ENCODE measurements at regions of chr2 and their contacts with region 1.

Region 1: GRCh38 chr2:175251425-175252041 is 70.0 kb upstream of the ATP5MC3 start:
- DNase-seq: peak; percentile 31
- ATAC-seq: no peak
- H3K4me3 Mint-ChIP-seq: no peak overlapping the region
- H3K27ac Mint-ChIP-seq: no peak overlapping the region
- H3K4me1 Mint-ChIP-seq: peaks cover 7% of the 10 kb centered on the region
- H3K27me3 Mint-ChIP-seq: peaks cover 23% of the 10 kb centered on the region

Region 2: GRCh38 chr2:175203621-175204496 is 47.7 kb before region 1 on chr2:
- CTCF ChIA-PET with region 1: interaction called, 18 read pairs
- POLR2A ChIA-PET with region 1: no interaction called
- DNase-seq: peak; percentile 64
- ATAC-seq: peak; percentile 84
- H3K4me3 Mint-ChIP-seq: no peak overlapping the region
- H3K27ac Mint-ChIP-seq: no peak overlapping the region
- H3K4me1 Mint-ChIP-seq: no peaks in the 10 kb centered on the region
- H3K27me3 Mint-ChIP-seq: peaks cover 15% of the 10 kb centered on the region

Region 3: DNA sequence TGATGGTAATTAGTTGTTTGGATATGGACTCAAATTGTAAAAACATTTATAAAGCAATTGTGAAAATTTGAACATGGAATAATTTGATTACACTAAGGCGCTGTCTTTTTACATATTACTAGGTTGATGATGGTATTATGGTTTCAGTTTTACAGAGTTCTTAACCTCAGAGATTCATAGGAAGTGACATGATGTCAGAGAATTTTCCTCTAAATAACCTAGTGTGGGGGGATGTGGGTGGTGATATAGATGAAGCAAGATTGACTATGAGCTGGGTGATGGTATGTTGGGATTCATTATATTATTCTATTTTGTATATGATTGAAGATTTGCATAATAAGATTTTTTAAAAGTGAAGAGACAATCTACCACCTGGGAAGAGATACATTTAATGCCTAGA is 24.1 kb before region 1 on chr2:
- CTCF ChIA-PET with region 1: interaction called, 10 read pairs
- POLR2A ChIA-PET with region 1: no interaction called
- DNase-seq: no peak
- ATAC-seq: peak; percentile 75
- H3K4me3 Mint-ChIP-seq: no peak overlapping the region
- H3K27ac Mint-ChIP-seq: no peak overlapping the region
- H3K4me1 Mint-ChIP-seq: peaks cover 15% of the 10 kb centered on the region
- H3K27me3 Mint-ChIP-seq: peaks cover 17% of the 10 kb centered on the region

Region 4: GRCh38 chr2:175275539-175275938 is 24.0 kb after region 1 on chr2:
- CTCF ChIA-PET with region 1: interaction called, 16 read pairs
- POLR2A ChIA-PET with region 1: no interaction called
- DNase-seq: no peak
- ATAC-seq: no peak
- H3K4me3 Mint-ChIP-seq: no peak overlapping the region
- H3K27ac Mint-ChIP-seq: no peak overlapping the region
- H3K4me1 Mint-ChIP-seq: no peaks in the 10 kb centered on the region
- H3K27me3 Mint-ChIP-seq: peaks cover 16% of the 10 kb centered on the region

Region 5: GRCh38 chr2:175282290-175282689 is 30.8 kb after region 1 on chr2:
- CTCF ChIA-PET with region 1: interaction called, 20 read pairs
- POLR2A ChIA-PET with region 1: no interaction called
- DNase-seq: no peak
- ATAC-seq: peak; percentile 44
- H3K4me3 Mint-ChIP-seq: no peak overlapping the region
- H3K27ac Mint-ChIP-seq: no peak overlapping the region
- H3K4me1 Mint-ChIP-seq: no peaks in the 10 kb centered on the region
- H3K27me3 Mint-ChIP-seq: peaks cover 14% of the 10 kb centered on the region

Region 6: DNA sequence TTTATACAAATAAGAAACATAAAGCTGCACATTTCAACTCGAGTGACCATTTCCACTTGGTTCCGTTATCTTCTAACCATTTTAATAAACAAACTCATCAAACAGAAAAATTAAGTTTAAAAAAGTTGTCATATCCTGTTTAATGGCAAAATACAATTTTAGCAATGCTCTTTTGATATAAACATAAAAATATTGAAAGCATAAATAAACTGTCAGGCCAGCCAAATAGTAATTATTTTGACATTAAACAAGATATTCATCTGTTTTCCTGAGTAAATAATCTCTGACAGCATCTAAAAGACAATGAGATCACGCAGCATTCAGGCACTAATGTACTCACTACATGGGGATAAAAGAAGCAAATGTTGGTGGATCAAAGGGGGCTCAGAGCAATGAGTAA is 75.3 kb after region 1 on chr2:
- CTCF ChIA-PET with region 1: interaction called, 12 read pairs
- POLR2A ChIA-PET with region 1: no interaction called
- DNase-seq: no peak
- ATAC-seq: no peak
- H3K4me3 Mint-ChIP-seq: no peak overlapping the region
- H3K27ac Mint-ChIP-seq: no peak overlapping the region
- H3K4me1 Mint-ChIP-seq: peaks cover 9% of the 10 kb centered on the region
- H3K27me3 Mint-ChIP-seq: peaks cover 2% of the 10 kb centered on the region

Region 7: GRCh38 chr2:176096986-176097819 is 845.7 kb after region 1 on chr2:
- CTCF ChIA-PET with region 1: interaction called, 11 read pairs
- POLR2A ChIA-PET with region 1: interaction called, 3 read pairs
- DNase-seq: peak; percentile 68
- ATAC-seq: peak; percentile 79
- H3K4me3 Mint-ChIP-seq: peak overlapping the region; percentile 52
- H3K27ac Mint-ChIP-seq: no peak overlapping the region
- H3K4me1 Mint-ChIP-seq: peaks cover 14% of the 10 kb centered on the region
- H3K27me3 Mint-ChIP-seq: peaks cover 81% of the 10 kb centered on the region